Mammary epithelial cell (primary cell): ENCODE measurements at regions of chr17 and their contacts with region 1.

Region 1: GRCh38 chr17:55845385-55845784 is 94.5 kb downstream of the PCTP start:
- DNase-seq: peak; percentile 3
- H3K4me3 ChIP-seq: no peak overlapping the region
- H3K27ac ChIP-seq: no peak overlapping the region
- H3K4me1 ChIP-seq: no peaks in the 10 kb centered on the region
- H3K27me3 ChIP-seq: no peaks in the 10 kb centered on the region
- CTCF ChIP-seq: peak; percentile 57 to 73

Region 2: DNA sequence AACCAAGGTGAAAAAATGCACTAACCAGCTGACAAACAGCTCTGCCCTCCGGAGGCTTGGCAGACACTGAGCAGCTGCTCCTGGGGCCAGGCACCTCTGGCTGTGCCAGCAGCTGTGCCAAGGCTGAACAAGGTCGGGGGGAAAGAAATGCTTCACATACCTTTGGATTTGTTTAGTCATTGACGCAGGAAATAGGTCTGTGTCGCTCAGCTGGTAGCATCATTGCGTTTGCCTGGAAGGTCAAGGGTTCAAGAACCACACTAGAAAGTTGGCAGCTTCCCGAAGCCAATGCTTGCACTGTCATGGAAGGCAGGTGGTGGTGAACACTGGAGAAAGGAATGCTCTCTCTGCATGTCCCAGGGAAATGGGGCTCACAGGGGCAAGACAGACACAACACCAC is 31.0 kb before region 1 on chr17:
- CTCF ChIA-PET with region 1: no interaction called
- dilution Hi-C with region 1: no loop called
- in situ Hi-C with region 1: no loop called
- intact Hi-C with region 1: no loop called
- DNase-seq: no peak
- H3K4me3 ChIP-seq: no peak overlapping the region
- H3K27ac ChIP-seq: no peak overlapping the region
- H3K4me1 ChIP-seq: no peaks in the 10 kb centered on the region
- H3K27me3 ChIP-seq: peaks cover 2% of the 10 kb centered on the region
- CTCF ChIP-seq: no peak

Region 3: GRCh38 chr17:56478836-56479447 is 633.6 kb after region 1 on chr17:
- CTCF ChIA-PET with region 1: no interaction called
- dilution Hi-C with region 1: no loop called
- in situ Hi-C with region 1: no loop called
- intact Hi-C with region 1: loop called (anchors 1 kb)
- DNase-seq: peak; percentile 32
- H3K4me3 ChIP-seq: no peak overlapping the region
- H3K27ac ChIP-seq: no peak overlapping the region
- H3K4me1 ChIP-seq: no peaks in the 10 kb centered on the region
- H3K27me3 ChIP-seq: peaks cover 1% of the 10 kb centered on the region
- CTCF ChIP-seq: peak; percentile 55 to 59